Ascending aorta (tissue), 2 donors: ENCODE measurements at regions of chr17 and their contacts with region 1.

Region 1: DNA sequence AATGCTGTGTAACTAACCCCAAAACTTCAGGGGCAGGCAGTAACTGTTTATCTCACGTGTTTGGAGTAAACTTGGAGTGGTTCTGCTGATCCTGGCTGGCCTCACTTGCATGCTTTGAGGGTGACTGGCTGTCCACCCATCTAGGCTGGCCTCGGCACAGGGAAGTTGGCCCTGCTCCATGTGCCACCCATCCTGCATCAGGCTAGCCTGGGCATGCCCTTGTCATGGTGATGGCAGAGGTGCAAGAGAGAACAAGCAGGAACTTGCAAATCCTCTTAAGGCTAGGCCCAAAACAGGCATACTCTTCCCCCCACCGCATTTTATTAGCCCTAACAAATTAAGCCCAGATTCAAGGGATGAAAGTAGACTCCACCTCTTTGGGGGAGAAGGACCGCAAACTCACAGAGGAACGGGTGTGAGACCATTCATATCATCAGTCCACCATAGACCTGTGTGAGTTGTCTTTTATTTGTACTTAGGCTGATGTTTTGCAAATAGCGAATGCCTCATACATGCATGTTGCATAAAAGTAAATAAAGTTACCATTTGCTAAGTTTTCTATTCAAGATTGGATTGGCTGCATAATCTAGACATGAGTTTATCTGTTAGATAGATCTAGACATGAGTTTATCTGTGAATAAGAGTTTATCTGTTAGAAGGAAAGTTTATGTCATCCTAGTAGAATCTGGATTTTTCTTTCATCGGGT is 221.0 kb downstream of the CCDC182 start:
- DNase-seq: peak; percentile 46 to 91
- H3K4me3 ChIP-seq: no peak overlapping the region
- H3K27ac ChIP-seq: peak overlapping the region; percentile 67 to 82
- H3K4me1 ChIP-seq: peaks cover 4 to 10% of the 10 kb centered on the region in 2 donors
- H3K27me3 ChIP-seq: no peaks in the 10 kb centered on the region
- CTCF ChIP-seq: no peak

Region 2: DNA sequence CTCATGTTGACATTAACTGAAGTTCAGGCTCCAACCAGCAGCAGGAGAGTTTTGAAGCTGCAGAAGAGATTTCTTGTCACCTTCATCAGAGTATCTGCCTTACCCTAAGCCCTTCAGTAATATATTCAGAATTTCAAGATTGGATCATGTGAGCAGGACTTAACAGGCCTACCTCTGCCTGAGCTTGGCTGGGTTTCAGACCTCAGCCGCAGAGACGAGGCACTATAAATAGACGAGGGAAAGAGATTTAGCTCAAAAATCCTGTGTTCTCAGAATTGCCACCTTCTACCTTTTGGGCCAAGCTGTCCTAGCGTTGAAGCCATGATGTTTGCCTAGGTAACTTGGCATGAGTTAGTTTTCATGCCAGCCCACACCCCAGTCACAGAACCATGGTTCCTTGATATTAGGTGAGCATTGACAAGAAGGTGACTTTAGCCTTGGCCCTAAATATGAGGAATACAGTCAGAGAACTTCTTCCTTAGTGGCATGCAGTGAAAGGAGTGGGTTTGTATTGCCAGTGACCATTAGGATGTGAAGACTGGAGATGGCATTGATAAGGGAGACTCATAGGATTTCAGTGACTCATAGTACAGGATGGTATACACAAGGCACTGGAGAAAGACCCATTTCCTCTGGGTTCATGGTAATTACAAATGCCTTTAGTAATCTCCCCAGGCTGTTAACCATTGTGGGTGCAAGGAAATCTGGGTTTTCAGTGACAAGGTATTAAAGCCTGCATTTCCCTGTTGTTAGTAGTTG is 43.5 kb before region 1 on chr17:
- intact Hi-C with region 1: loop called (anchors 5 kb)
- DNase-seq: no peak
- H3K4me3 ChIP-seq: no peak overlapping the region
- H3K27ac ChIP-seq: peak overlapping the region; percentile 35 to 37
- H3K4me1 ChIP-seq: peaks cover 0 to 32% of the 10 kb centered on the region in 2 donors
- H3K27me3 ChIP-seq: no peaks in the 10 kb centered on the region
- CTCF ChIP-seq: no peak

Region 3: DNA sequence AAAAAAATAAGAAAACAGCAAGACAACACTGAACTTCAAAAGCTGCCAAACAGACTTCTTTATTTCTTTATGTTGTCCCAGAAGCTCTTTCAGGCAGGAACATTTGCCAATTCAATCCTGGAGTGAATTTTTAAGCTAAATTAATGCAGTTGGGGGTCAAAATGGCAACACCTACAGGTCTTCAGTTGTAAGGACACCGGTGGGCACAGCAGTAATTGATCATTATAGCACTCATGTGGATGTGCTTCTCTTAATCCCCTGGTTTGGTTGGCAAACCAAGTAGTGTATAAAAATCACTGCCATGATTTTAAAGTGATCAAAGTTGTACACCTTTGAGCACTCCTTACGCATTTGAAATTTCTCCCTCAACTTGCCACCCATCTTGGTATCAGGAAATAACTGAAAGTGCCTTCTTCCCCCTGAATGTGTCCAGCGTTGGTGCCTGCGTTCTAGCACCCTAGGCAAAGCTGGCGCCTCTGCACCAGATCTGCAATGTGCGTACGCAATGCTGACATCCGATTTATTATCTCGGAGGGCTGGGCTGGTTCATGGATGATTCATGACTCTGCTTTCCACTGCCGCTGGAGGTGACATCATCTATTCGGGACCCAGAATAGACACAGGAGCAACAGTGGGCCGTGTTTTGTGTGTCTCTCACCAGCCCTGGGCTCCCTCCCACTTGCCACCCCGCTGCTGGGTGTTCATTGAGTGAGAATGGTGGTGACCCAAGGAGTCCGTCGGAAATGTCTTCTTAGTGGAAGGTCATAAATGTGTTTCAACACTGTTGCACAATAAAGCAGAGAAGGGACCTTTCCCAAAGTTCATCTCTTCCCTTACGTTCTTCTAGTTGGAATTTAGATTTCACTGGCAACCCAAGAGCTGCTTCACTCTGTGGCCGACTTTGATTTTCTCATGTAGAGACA is 17.7 kb after region 1 on chr17:
- intact Hi-C with region 1: loop called (anchors 1 kb)
- DNase-seq: peak; percentile 64 to 90
- H3K4me3 ChIP-seq: peak overlapping the region in 1 of 2 donors; percentile 28
- H3K27ac ChIP-seq: peak overlapping the region; percentile 9 to 35
- H3K4me1 ChIP-seq: peaks cover 0 to 8% of the 10 kb centered on the region in 2 donors
- H3K27me3 ChIP-seq: no peaks in the 10 kb centered on the region
- CTCF ChIP-seq: no peak